HCT116 (cell line): ENCODE measurements at regions of chr1 and their contacts with region 1.

Region 1: DNA sequence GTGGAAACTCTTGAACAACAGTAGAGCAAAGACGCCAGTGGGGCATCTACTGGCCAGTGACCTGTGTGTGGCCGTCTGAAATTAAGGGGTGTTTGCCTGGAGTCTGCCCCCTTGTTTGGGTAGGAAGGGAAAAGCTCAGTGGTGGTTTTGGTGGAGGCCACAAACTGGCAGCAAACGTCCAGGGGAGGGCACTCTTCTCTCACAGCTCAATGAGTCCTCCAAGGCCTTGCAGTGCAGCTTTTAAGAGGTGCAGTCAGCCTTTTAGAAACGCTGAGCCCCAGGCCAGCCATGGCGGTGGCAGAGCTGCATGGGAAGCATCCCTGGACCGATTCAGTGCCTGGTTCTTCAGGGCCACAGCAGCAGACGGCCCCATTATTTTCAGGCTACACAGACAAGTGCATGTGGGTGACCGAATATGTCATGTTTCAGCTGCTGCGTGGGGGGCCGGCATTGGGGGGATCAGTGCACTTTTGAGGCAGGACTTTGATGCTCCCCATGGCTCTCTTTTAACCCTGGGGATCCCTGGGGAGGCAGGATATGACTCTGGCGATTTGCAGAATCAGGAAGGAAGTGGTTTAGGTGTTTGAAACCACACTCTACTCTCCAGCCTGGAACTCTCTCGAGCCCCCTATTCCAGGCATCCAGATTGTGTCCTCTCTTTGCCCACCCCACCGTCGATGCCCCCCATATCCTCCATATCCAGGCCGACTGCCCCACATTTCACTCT is 414.0 kb downstream of the PRDM2 start:
- DNase-seq: no peak
- ATAC-seq: peak; percentile 69
- H3K4me3 ChIP-seq: no peak overlapping the region
- H3K27ac ChIP-seq: no peak overlapping the region
- H3K4me1 ChIP-seq: no peaks in the 10 kb centered on the region
- H3K27me3 ChIP-seq: no peaks in the 10 kb centered on the region; the same call in 1 of the 2 replicates
- CTCF ChIP-seq: peak; percentile 27 to 49 (median 44); a peak in 4 of 6 replicates
- POLR2A ChIP-seq: no peak
- RAD21 ChIP-seq: peak; percentile 63

Region 2: DNA sequence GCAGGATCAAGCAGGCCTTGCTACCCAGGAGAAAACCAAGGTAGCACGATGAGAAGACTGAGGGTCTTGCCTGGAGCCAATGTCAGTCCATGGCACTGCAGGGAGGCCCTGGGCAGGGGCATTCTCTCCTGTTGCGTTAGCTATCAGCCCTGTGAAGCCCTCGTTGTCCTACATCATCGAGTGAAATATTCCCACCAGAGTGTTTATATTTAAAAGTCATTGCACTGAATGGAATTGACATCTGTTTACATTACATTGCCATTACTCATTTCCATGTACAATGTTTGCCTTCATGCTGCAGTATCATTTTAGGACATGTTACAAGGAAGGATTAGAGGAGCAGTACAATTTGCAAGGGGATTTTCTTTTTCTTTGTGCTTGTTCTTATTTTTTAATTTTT is 728.4 kb after region 1 on chr1:
- CTCF ChIA-PET with region 1: no interaction called
- POLR2A ChIA-PET with region 1: no interaction called
- RAD21 ChIA-PET with region 1: no interaction called
- intact Hi-C with region 1: loop called (anchors 10 kb)
- DNase-seq: no peak
- ATAC-seq: no peak
- H3K4me3 ChIP-seq: no peak overlapping the region
- H3K27ac ChIP-seq: no peak overlapping the region
- H3K4me1 ChIP-seq: no peaks in the 10 kb centered on the region
- H3K27me3 ChIP-seq: peaks cover 17% of the 10 kb centered on the region; the same call in 1 of the 2 replicates
- CTCF ChIP-seq: no peak
- POLR2A ChIP-seq: no peak
- RAD21 ChIP-seq: no peak